ENCODE measurements at regions of chr1 and their contacts with region 1.

Region 1: DNA sequence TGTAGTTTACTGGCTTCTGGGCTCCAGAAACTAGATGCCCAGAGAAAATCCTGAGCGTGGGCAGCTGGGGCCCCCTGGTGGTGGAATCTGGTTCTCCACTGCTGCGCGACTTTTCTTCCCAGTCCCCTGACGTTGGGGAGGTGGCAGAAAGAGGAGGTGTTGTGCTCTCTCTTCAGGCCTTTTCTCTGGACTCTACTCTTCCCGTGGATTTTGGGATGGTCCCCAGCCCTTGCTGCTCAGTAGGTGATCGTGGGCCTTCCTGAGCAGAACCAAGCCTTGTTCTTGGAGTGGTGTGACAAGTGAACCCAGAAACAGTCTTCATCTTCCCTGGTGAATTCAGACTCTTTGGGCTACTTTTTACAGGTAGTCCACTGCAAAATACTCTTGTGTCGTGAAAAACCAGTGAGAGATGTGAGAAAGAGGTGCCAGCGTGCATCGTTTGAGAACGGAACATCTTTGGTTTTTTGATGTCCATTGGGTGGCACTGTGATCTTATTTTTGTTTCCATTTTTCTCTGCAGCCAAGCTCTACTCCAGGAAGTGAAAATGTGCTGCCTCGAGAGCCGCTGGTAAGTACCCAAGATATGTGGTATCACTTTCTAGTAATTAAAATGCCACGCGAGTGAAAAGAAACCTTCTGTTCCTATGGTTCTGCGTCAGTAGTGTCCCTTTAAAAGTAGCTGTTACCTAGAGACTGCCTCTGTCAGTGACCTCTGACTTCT is 20.2 kb downstream of the PEX14 start:
- DNase-seq: peak; percentile 71 to 75 (median 75)
- H3K4me3 ChIP-seq: peak overlapping the region; percentile 77 to 88
- H3K4me3 Mint-ChIP-seq: peak overlapping the region; percentile 82 to 92 (median 88)
- H3K27ac ChIP-seq: peak overlapping the region; percentile 53
- H3K27ac Mint-ChIP-seq: peak overlapping the region; percentile 58 to 96 (median 93)
- H3K4me1 ChIP-seq: peaks cover 21% of the 10 kb centered on the region
- H3K4me1 Mint-ChIP-seq: peaks cover 21 to 36% (median 29%) of the 10 kb centered on the region in 4 donors
- H3K27me3 ChIP-seq: no peaks in the 10 kb centered on the region
- H3K27me3 Mint-ChIP-seq: no peaks in the 10 kb centered on the region

Region 2: DNA sequence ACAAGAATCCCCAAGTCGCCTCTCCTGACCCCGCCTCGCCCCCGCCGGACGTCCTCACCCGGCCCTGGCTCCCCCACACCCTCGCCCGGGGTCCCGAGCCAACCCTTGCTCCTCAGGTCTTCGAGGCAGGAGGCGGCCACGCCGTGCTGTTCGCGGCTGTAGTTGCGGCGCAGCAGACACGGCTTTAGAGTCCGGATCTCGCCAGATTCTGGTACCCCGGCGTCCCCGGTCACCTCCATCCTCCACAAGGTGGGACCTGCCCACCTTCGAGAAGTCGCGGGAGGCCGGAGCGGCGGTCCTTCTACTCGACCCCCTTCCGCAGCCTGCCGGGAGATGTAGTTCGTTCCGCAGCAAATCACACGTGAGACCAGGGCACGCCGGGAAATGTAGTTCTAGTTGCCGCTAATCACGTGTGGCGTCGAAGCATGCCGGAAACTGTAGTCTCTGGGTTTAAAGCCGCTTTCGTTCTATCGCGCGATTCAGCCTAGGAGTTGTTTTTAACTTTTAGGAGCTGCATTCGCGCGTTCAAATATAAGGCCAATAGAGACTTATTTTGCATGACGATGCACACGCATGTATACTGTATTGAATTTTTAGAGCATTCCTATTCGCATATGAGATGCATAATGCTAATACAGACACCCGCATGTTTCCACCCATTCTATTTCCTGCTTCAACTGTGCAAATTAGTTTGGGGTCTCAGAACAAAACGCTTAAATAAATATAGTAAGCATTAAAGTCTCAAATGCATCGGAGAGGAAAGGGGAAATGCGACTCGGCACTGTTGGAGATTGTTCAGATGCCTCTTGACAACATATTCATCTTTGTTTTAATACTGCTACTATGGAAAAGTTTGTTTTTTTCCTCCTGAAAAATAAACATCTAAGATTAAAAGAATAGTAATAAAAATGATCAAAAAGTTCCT is 22.4 kb before region 1 on chr1 and contains the start of gene DFFA:
- CTCF ChIA-PET with region 1: interaction called, 39 read pairs
- POLR2A ChIA-PET with region 1: interaction called, 3 read pairs
- intact Hi-C with region 1: no loop called
- DNase-seq: peak; percentile 86 to 96 (median 88)
- H3K4me3 ChIP-seq: peak within 1 kb of the TSS; percentile 64 to 84
- H3K4me3 Mint-ChIP-seq: peak within 1 kb of the TSS; percentile 91 to 95 (median 92)
- H3K27ac ChIP-seq: peak within 1 kb of the TSS; percentile 68
- H3K27ac Mint-ChIP-seq: peak within 1 kb of the TSS; percentile 83 to 94 (median 89)
- H3K4me1 ChIP-seq: peaks cover 50% of the 10 kb centered on the region
- H3K4me1 Mint-ChIP-seq: peaks cover 32 to 53% (median 43%) of the 10 kb centered on the region in 4 donors
- H3K27me3 ChIP-seq: no peaks in the 10 kb centered on the region
- H3K27me3 Mint-ChIP-seq: no peaks in the 10 kb centered on the region
- total RNA-seq, gene DFFA: 22.4 to 25.3 TPM

Region 3: DNA sequence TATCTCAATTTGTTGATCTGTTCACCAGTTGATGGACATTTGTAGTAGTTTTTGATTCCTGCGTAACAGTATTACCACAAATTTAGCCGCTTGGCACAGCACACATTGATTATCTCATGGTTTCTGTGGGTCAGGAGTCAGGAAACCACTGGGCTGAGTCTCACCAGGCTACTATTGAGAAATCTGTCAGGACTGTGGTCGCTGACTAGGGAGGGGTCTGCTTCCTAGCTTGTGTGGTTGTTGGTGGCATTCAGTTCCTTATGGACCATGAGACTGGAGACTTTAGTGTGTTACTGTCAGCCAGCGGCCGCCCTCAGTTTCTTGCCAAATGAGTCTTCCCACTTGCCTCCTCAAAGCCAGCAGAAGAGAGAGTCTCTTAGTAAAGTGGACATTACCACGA is 10.4 kb before region 1 on chr1:
- CTCF ChIA-PET with region 1: interaction called, 39 read pairs
- POLR2A ChIA-PET with region 1: no interaction called
- intact Hi-C with region 1: no loop called
- DNase-seq: no peak
- H3K4me3 ChIP-seq: no peak overlapping the region
- H3K4me3 Mint-ChIP-seq: no peak overlapping the region
- H3K27ac ChIP-seq: no peak overlapping the region
- H3K27ac Mint-ChIP-seq: no peak overlapping the region
- H3K4me1 ChIP-seq: no peaks in the 10 kb centered on the region
- H3K4me1 Mint-ChIP-seq: peaks cover 2 to 16% (median 13%) of the 10 kb centered on the region in 4 donors
- H3K27me3 ChIP-seq: no peaks in the 10 kb centered on the region
- H3K27me3 Mint-ChIP-seq: no peaks in the 10 kb centered on the region

Region 4: GRCh38 chr1:10514490-10515235 is 19.7 kb after region 1 on chr1:
- CTCF ChIA-PET with region 1: interaction called, 31 read pairs
- POLR2A ChIA-PET with region 1: interaction called, 28 read pairs
- intact Hi-C with region 1: loop called (anchors 1 kb)
- DNase-seq: peak in 2 of 5 donors; percentile 24 to 29
- H3K4me3 ChIP-seq: no peak overlapping the region
- H3K4me3 Mint-ChIP-seq: peak overlapping the region in 7 of 8 donors; percentile 51 to 70 (median 63)
- H3K27ac ChIP-seq: peak overlapping the region; percentile 32
- H3K27ac Mint-ChIP-seq: peak overlapping the region; percentile 77 to 96 (median 93)
- H3K4me1 ChIP-seq: peaks cover 86% of the 10 kb centered on the region
- H3K4me1 Mint-ChIP-seq: peaks cover 69 to 90% (median 80%) of the 10 kb centered on the region in 4 donors
- H3K27me3 ChIP-seq: no peaks in the 10 kb centered on the region
- H3K27me3 Mint-ChIP-seq: no peaks in the 10 kb centered on the region

Region 5: GRCh38 chr1:10909697-10910671 is 415.1 kb after region 1 on chr1:
- CTCF ChIA-PET with region 1: interaction called, 25 read pairs
- POLR2A ChIA-PET with region 1: interaction called, 3 read pairs
- intact Hi-C with region 1: loop called (anchors 1 kb)
- DNase-seq: peak; percentile 60 to 72 (median 64)
- H3K4me3 ChIP-seq: no peak overlapping the region
- H3K4me3 Mint-ChIP-seq: no peak overlapping the region
- H3K27ac ChIP-seq: no peak overlapping the region
- H3K27ac Mint-ChIP-seq: no peak overlapping the region
- H3K4me1 ChIP-seq: peaks cover 17% of the 10 kb centered on the region
- H3K4me1 Mint-ChIP-seq: peaks cover 1 to 23% (median 7%) of the 10 kb centered on the region in 4 donors
- H3K27me3 ChIP-seq: no peaks in the 10 kb centered on the region
- H3K27me3 Mint-ChIP-seq: peaks cover 3 to 4% of the 10 kb centered on the region in 2 donors